Thyroid gland (tissue), 4 donors: ENCODE measurements at regions of chr14 and their contacts with region 1.

Region 1: DNA sequence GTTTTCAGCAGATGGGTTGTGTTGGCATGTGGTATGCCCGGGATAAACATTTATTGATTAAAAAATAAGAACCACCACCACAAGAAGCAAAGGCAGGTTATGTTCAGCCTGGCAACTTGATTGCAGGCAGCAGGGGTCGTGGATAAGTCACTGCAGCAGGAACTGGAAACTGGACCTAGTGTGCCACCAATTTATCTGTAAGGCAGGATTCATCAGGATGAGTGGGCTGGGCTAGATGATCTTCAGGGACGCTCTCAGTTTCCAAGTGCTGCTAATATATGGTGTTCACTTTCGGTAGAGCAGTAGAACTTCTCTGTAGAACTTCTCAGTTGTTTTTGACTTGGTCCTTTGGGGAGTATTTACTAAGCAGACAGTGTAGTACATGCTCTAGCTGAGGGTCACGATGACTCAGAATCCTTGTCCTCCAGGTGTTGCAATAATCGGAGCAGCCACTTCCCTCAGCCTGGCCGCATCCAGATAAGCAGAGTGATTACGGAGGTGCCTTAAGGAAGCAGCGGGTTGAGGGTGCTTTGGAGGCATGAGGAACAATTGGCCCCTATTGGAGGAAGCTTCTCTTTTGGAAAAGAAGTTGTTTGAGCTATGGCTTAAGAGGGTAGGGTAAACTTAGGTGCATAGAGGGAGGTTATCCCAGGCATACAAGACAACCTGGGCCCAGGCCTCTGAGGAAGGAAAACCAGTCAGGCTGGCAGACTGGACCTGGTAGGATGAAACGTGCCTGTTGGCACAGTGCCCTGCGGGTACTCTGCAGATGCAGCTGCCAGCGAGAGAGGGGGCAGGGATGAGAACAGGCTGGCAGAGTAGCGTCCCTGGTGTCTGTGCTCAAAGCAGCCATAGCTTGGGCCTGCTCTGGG is 104.0 kb downstream of the GPR135 start:
- DNase-seq: peak; percentile 95 to 96
- H3K4me3 ChIP-seq: no peak overlapping the region
- H3K27ac ChIP-seq: peak overlapping the region; percentile 78 to 90 (median 79)
- H3K4me1 ChIP-seq: peaks cover 18 to 50% of the 10 kb centered on the region in 2 donors
- H3K27me3 ChIP-seq: no peaks in the 10 kb centered on the region
- CTCF ChIP-seq: peak in 2 of 6 experiments; percentile 9 to 15
- POLR2A ChIP-seq: no peak

Region 2: GRCh38 chr14:58861586-58861985 is 499.6 kb before region 1 on chr14:
- intact Hi-C with region 1: no loop called
- DNase-seq: no peak
- H3K4me3 ChIP-seq: no peak overlapping the region
- H3K27ac ChIP-seq: no peak overlapping the region
- H3K4me1 ChIP-seq: no peaks in the 10 kb centered on the region
- H3K27me3 ChIP-seq: no peaks in the 10 kb centered on the region
- CTCF ChIP-seq: no peak
- POLR2A ChIP-seq: no peak

Region 3: GRCh38 chr14:59189786-59190771 is 171.1 kb before region 1 on chr14:
- intact Hi-C with region 1: loop called (anchors 5 kb)
- DNase-seq: peak; percentile 91 to 92
- H3K4me3 ChIP-seq: peak overlapping the region in 2 of 3 donors; percentile 76 to 90
- H3K27ac ChIP-seq: peak overlapping the region; percentile 92 to 95 (median 94)
- H3K4me1 ChIP-seq: peaks cover 5 to 7% of the 10 kb centered on the region in 2 donors
- H3K27me3 ChIP-seq: no peaks in the 10 kb centered on the region
- CTCF ChIP-seq: no peak
- POLR2A ChIP-seq: no peak

Region 4: DNA sequence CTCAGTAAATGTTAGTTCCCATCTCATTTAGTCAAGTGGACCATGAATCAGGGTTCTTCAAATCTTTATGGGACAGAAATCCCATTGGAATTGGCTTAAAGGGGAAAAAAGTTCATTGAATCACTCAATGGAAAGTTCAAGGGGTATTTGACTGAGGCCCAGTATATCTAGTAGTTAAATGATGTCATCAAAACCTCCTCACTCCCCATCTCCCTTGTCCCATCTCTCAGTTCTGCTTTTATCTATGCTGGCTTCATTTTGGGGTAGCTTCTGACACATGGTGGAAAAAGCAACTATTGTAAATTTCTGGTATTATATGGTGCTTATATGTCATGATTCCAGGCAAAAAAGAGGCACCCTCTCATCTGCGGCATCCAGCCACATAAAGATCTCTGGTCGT is 120.8 kb before region 1 on chr14:
- intact Hi-C with region 1: no loop called
- DNase-seq: no peak
- H3K4me3 ChIP-seq: no peak overlapping the region
- H3K27ac ChIP-seq: no peak overlapping the region
- H3K4me1 ChIP-seq: peaks cover 24 to 34% of the 10 kb centered on the region in 2 donors
- H3K27me3 ChIP-seq: no peaks in the 10 kb centered on the region
- CTCF ChIP-seq: no peak
- POLR2A ChIP-seq: no peak

Region 5: DNA sequence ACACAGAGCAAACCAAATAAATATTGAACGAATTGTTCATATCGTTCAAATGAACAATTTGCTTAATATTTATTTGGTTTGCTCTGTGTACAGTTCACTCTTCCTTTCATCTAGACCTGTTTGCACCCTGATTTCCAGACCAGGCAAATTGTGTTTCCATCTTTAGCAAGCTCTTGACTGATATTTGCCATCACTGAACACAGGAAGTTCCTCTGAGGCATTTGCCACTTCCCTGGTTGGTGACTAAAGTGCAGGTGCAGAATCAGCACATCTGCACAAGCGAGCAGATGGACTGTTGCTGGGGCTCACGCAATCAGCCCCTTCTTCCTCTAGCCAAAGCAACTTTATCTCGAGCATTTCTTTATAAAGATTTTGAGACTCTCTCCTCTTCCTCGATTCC is 59.8 kb before region 1 on chr14:
- intact Hi-C with region 1: no loop called
- DNase-seq: no peak
- H3K4me3 ChIP-seq: no peak overlapping the region
- H3K27ac ChIP-seq: no peak overlapping the region
- H3K4me1 ChIP-seq: peaks cover 21 to 31% of the 10 kb centered on the region in 2 donors
- H3K27me3 ChIP-seq: no peaks in the 10 kb centered on the region
- CTCF ChIP-seq: no peak
- POLR2A ChIP-seq: no peak

Region 6: GRCh38 chr14:59490756-59491155 is 129.6 kb after region 1 on chr14:
- intact Hi-C with region 1: no loop called
- DNase-seq: no peak
- H3K4me3 ChIP-seq: no peak overlapping the region
- H3K27ac ChIP-seq: no peak overlapping the region
- H3K4me1 ChIP-seq: peaks cover 4 to 6% of the 10 kb centered on the region in 2 donors
- H3K27me3 ChIP-seq: no peaks in the 10 kb centered on the region
- CTCF ChIP-seq: no peak
- POLR2A ChIP-seq: no peak